Cardiac septum (tissue), 1 donor: ENCODE measurements at regions of chr3 and their contacts with region 1.

Region 1: DNA sequence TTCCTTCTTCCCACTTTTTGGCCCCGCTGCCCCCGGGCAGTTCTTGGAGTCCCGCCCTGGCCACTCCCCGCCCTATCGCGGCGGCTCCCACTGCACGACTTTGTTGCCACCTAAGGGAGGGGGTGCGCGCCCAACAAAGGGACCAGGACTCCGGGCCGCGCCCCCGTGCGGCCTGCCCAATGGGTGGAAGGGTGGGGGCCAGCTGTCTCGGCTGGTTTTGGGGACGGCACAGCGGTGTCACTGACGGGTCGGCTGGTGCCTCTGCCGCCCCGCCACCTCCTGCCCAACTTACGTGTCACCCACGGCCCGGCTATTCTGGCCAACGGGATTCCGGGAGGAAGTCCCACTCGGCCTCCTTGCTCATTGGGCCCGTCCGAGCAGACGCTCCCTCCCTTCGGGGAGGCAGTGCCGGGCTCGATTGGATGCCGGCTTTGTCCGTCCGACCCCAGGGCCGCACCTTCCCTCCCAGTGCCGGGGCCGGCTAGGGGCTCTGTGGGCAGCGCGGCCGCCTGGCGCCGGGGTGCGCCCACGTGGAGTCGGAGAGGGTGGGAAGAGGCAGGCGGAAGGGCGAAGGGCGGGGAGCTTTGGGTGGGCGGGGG is at the start of gene GOLIM4:
- DNase-seq: peak; percentile 98
- total RNA-seq, gene GOLIM4: 88.8 TPM

Region 2: GRCh38 chr3:166962911-166963310 is 1132.8 kb before region 1 on chr3:
- intact Hi-C with region 1: no loop called
- DNase-seq: no peak

Region 3: GRCh38 chr3:168047190-168047795 is 48.4 kb before region 1 on chr3:
- intact Hi-C with region 1: loop called (anchors 2 kb)
- DNase-seq: no peak